ENCODE measurements at regions of chr7 and their contacts with region 1.

Region 1: GRCh38 chr7:105346593-105347322 is 42.0 kb downstream of the SRPK2 start:
- DNase-seq: peak; percentile 28
- H3K4me3 Mint-ChIP-seq: no peak overlapping the region
- H3K27ac Mint-ChIP-seq: no peak overlapping the region
- H3K4me1 Mint-ChIP-seq: peaks cover 51% of the 10 kb centered on the region
- H3K27me3 Mint-ChIP-seq: no peaks in the 10 kb centered on the region

Region 2: GRCh38 chr7:105209870-105210269 is 136.9 kb before region 1 on chr7:
- CTCF ChIA-PET with region 1: interaction called, 3 read pairs
- POLR2A ChIA-PET with region 1: interaction called, 3 read pairs
- intact Hi-C with region 1: loop called (anchors 2 kb)
- DNase-seq: no peak
- H3K4me3 Mint-ChIP-seq: no peak overlapping the region
- H3K27ac Mint-ChIP-seq: no peak overlapping the region
- H3K4me1 Mint-ChIP-seq: peaks cover 73% of the 10 kb centered on the region
- H3K27me3 Mint-ChIP-seq: no peaks in the 10 kb centered on the region

Region 3: GRCh38 chr7:105268511-105269392 is 78.0 kb before region 1 on chr7:
- CTCF ChIA-PET with region 1: no interaction called
- POLR2A ChIA-PET with region 1: no interaction called
- intact Hi-C with region 1: loop called (anchors 5 kb)
- DNase-seq: no peak
- H3K4me3 Mint-ChIP-seq: peak overlapping the region; percentile 74
- H3K27ac Mint-ChIP-seq: peak overlapping the region; percentile 79
- H3K4me1 Mint-ChIP-seq: peaks cover 52% of the 10 kb centered on the region
- H3K27me3 Mint-ChIP-seq: no peaks in the 10 kb centered on the region

Region 4: DNA sequence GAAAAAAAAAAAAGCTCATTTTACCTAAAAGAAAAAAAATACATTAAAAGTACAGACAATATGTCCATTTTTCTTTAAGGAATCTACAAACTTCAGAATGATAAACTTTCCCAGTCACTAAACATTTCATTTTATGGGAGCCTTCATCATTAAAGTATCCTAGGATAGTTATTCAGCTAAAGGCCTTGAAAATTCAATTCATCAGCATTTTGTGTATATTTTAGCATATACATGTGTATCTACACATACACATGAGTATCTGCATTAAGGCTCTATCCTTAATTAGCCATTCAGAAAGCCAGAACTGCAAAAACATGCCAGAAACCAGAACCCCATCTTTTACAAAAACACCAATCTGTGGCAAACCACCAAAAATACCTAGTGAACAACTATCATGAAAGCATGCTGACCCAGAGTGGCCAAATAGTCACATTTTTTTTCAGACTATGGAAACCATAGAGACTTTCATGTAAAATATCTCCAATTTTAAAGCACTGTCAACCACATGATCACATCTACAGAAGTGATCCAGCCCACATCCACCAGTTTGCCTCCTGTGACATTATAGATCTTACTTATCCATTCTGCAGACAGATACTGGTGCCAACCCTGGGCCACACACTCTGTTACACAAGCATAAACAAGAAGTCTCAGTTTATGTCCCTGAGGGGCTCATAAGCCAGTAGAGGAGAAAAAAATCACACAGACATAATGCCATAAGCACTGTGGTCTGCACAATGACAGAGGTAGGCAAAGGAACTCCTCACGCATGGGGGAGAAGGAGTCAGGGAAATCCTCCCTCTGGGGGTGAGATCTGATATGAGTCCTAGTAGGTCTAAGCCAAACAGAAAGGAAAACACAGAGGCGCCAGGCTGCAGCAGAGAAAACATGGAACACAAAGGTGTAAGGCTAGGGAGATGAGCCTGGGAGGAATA is 37.3 kb before region 1 on chr7:
- CTCF ChIA-PET with region 1: no interaction called
- POLR2A ChIA-PET with region 1: interaction called, 3 read pairs
- intact Hi-C with region 1: loop called (anchors 2 kb)
- DNase-seq: peak; percentile 31
- H3K4me3 Mint-ChIP-seq: no peak overlapping the region
- H3K27ac Mint-ChIP-seq: peak overlapping the region; percentile 4
- H3K4me1 Mint-ChIP-seq: peaks cover 64% of the 10 kb centered on the region
- H3K27me3 Mint-ChIP-seq: no peaks in the 10 kb centered on the region

Region 5: GRCh38 chr7:105364748-105365147 is 18.0 kb after region 1 on chr7:
- CTCF ChIA-PET with region 1: no interaction called
- POLR2A ChIA-PET with region 1: no interaction called
- intact Hi-C with region 1: no loop called
- DNase-seq: no peak
- H3K4me3 Mint-ChIP-seq: no peak overlapping the region
- H3K27ac Mint-ChIP-seq: no peak overlapping the region
- H3K4me1 Mint-ChIP-seq: peaks cover 12% of the 10 kb centered on the region
- H3K27me3 Mint-ChIP-seq: no peaks in the 10 kb centered on the region

Measured in activated CD4-positive, alpha-beta memory T cell treated with anti-CD3 and anti-CD28 coated beads for 36 hours (primary cell).